Dorsolateral prefrontal cortex (tissue), 120 donors: ENCODE measurements at regions of chr1 and their contacts with region 1.

Region 1: DNA sequence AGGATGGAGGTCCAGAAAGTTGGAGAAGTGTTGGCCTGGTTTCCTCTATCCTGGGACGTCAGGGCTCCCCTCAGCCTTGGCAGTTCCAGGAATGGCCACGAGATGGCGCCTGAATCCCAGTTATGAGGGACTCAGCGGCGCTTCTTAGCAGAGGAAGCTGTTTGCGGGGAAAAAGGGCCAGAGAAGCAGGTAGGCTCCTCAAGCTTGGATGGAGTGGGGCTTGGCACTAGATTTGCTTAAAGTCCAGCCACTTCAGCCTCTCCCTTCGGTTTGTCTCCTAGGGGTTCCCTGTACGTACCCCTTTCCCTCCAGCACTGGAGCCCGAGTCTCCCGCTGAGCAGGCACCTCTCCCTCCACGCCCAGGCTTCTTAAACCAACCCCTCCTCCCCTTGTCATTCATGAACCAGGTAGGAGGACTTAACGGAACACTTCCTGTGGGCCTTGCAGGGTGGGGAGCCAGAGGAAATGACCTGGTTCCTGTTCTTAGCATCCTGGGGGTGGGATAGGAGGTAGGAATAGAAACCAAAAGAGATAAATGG is 32.0 kb upstream of the TENT5B start:
- DNase-seq: peak; percentile 76 to 92 (median 88)
- H3K4me3 ChIP-seq: peak overlapping the region in 55 of 59 donors; percentile 4 to 60 (median 42)
- H3K27ac ChIP-seq: peak overlapping the region in 22 of 59 donors; percentile 5 to 65 (median 43)
- H3K27me3 ChIP-seq: no peaks in the 10 kb centered on the region
- CTCF ChIP-seq: peak; percentile 93 to 100 (median 99)

Region 2: DNA sequence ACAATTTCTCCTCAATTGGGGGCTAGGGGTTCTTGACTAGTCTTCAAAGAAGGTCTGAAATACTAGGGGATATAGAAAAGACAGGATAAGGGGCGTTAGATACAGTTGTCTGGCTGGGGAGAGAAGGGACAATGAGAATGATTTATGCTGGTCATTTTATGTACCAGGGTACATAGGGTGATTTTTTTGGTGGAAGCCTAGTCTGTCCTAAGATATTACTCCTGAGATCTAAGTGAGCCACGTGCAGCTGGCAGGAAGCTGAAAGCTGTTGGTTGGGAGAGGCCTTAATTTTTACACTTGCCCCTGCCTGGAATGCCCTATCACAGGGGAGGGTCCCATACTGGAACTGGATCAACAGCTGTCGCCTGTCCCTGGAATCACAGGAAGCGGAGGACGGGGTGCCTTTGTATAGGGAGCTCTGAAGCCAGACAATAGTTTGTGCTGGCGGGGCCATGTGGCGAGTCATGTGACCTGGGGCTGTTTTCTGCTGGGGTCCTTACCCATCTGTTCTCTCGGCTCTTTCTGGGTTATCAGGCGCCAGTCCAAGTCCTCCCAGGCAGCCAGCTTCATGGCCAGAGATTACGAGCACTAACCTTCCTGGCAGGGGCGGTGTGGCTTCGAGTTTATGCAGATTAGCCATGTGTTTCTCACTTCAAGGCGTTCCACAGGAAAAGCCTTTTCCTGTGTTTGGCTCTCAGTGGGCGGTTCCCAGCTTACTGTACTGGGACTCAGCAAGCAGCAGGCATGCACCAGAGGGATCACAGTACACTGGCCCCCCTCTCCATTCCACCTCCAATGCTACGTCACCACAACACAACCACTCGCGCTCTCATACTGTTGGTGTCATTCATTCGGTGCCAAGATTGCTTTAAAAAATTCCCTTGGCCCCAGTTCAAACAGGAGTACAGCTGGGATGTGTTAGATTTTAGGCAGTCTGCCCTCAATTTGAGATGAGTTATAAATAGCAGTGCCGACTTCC is 321.4 kb before region 1 on chr1:
- intact Hi-C with region 1: no loop called
- DNase-seq: peak; percentile 58 to 96 (median 77)
- H3K4me3 ChIP-seq: peak overlapping the region in 41 of 59 donors; percentile 1 to 48 (median 17)
- H3K27ac ChIP-seq: peak overlapping the region in 50 of 59 donors; percentile 0 to 77 (median 45)
- H3K27me3 ChIP-seq: no peaks in the 10 kb centered on the region
- CTCF ChIP-seq: peak in 8 of 56 donors; percentile 6 to 21 (median 8)

Region 3: DNA sequence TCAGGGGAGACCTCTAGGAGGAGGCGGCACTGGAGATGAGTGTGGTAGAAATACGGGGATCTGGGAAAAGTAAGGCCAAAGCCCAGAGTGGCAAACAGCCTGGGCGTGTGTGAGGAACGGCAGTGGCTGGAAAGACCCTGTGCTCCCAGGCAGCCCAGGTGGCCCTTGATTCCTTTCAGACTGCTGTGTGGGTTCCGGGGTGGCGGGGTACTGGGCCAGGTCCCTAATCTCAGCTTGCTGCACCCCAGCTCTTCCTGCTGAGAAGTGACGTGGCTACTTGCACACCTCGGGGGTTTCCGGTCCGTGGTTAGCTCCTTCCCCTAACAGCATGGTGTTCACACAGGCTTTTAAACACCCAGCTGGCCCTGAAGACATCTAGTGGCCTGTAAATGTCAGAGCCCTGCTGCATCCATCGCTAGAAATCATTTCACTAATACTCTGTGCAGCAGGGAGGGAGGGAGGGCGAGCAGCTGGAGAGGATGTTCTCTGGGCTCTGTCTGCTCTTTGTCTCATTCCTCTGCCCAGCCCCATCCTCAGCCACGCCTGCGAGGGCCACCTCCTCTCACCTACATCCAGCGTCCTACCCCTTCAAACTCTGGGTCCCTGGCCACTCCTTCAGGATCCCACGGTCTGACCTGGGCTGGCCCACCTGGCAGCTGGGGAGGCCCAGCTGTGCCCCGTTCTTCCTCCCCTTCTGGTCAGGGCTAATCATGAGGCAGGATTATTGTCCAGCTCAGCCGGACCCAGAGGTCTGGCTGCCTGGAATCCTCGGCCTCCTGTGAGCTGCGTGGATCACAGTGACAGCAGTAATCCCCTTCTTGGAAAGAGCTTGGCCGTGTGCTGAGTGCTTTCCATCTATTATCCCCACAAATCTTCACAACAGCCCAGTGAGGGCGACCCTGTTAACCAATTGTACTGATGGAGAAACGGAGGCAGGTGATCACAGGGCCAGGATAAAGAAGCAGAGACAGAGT is 211.0 kb before region 1 on chr1:
- intact Hi-C with region 1: no loop called
- DNase-seq: no peak
- H3K4me3 ChIP-seq: no peak overlapping the region
- H3K27ac ChIP-seq: peak overlapping the region in 23 of 59 donors; percentile 8 to 68 (median 29)
- H3K27me3 ChIP-seq: no peaks in the 10 kb centered on the region
- CTCF ChIP-seq: no peak

Region 4: GRCh38 chr1:26999440-26999987 is 45.2 kb before region 1 on chr1:
- intact Hi-C with region 1: loop called in 1 of 2 experiments (anchors 5 kb)
- DNase-seq: no peak
- H3K4me3 ChIP-seq: no peak overlapping the region
- H3K27ac ChIP-seq: peak overlapping the region in 6 of 59 donors; percentile 2 to 55 (median 22)
- H3K27me3 ChIP-seq: peaks cover 0 to 7% (median 0%) of the 10 kb centered on the region in 45 donors
- CTCF ChIP-seq: no peak

Region 5: DNA sequence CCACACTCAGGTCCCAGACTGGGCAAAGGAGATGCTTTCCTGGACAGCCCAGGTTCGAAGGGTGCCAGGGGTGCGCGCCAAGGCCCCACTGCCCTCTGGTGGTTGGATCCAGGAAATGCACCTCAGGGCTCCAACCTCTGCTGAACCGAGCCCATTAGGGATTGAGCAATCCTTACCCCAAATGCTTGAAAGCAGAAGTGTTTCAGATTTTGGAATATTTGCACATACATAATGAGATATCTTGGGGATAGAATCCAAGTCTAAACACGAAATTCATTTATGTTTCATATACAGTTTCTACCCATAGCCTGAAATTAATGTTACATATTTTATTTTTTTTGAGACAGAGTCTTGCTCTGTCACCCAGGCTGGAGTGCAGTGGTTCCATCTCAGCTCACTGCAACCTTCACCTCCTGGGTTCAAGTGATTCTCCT is 52.8 kb after region 1 on chr1:
- intact Hi-C with region 1: loop called (anchors 1 to 2 kb)
- DNase-seq: peak in 9 of 10 donors; percentile 60 to 85 (median 73)
- H3K4me3 ChIP-seq: no peak overlapping the region
- H3K27ac ChIP-seq: peak overlapping the region in 4 of 59 donors; percentile 10 to 66 (median 12)
- H3K27me3 ChIP-seq: no peaks in the 10 kb centered on the region
- CTCF ChIP-seq: peak in 55 of 56 donors; percentile 85 to 99 (median 97)

Region 6: GRCh38 chr1:27284425-27285273 is 240.0 kb after region 1 on chr1:
- intact Hi-C with region 1: loop called (anchors 5 kb)
- DNase-seq: peak; percentile 64 to 95 (median 84)
- H3K4me3 ChIP-seq: no peak overlapping the region
- H3K27ac ChIP-seq: peak overlapping the region in 8 of 59 donors; percentile 0 to 52 (median 12)
- H3K27me3 ChIP-seq: no peaks in the 10 kb centered on the region
- CTCF ChIP-seq: peak; percentile 62 to 96 (median 90)